GM18951 (cell line): ENCODE measurements at regions of chr9 and their contacts with region 1.

Region 1: GRCh38 chr9:124320062-124320973 is 62.6 kb downstream of the NEK6 start:
- POLR2A ChIP-seq: no peak

Region 2: GRCh38 chr9:123401879-123402513 is 918.3 kb before region 1 on chr9:
- in situ Hi-C with region 1: loop called (anchors 25 kb)
- POLR2A ChIP-seq: no peak

Region 3: GRCh38 chr9:124118894-124119293 is 201.4 kb before region 1 on chr9:
- in situ Hi-C with region 1: loop called (anchors 5 kb)
- POLR2A ChIP-seq: no peak